Naive thymus-derived CD8-positive, alpha-beta T cell (primary cell): ENCODE measurements at regions of chr9 and their contacts with region 1.

Region 1: GRCh38 chr9:97237951-97238851 is 69.3 kb upstream of the CCDC180 start:
- DNase-seq: peak; percentile 54 to 86 (median 68)
- ATAC-seq: peak; percentile 95 to 96
- H3K4me3 Mint-ChIP-seq: peak overlapping the region; percentile 90 to 99 (median 96)
- H3K27ac Mint-ChIP-seq: peak overlapping the region; percentile 89 to 98 (median 94)
- H3K4me1 Mint-ChIP-seq: peaks cover 20 to 40% (median 25%) of the 10 kb centered on the region in 4 donors
- H3K27me3 Mint-ChIP-seq: no peaks in the 10 kb centered on the region

Region 2: GRCh38 chr9:97220894-97221477 is 17.2 kb before region 1 on chr9:
- POLR2A ChIA-PET with region 1: interaction called, 11 read pairs
- DNase-seq: no peak
- ATAC-seq: peak; percentile 23 to 41
- H3K4me3 Mint-ChIP-seq: peak overlapping the region; percentile 77 to 97 (median 86)
- H3K27ac Mint-ChIP-seq: peak overlapping the region in 1 of 10 donors; percentile 66
- H3K4me1 Mint-ChIP-seq: peaks cover 5 to 11% (median 9%) of the 10 kb centered on the region in 4 donors
- H3K27me3 Mint-ChIP-seq: peaks cover 32 to 80% (median 37%) of the 10 kb centered on the region in 5 donors